ENCODE measurements at regions of chr14 and their contacts with region 1.

Region 1: DNA sequence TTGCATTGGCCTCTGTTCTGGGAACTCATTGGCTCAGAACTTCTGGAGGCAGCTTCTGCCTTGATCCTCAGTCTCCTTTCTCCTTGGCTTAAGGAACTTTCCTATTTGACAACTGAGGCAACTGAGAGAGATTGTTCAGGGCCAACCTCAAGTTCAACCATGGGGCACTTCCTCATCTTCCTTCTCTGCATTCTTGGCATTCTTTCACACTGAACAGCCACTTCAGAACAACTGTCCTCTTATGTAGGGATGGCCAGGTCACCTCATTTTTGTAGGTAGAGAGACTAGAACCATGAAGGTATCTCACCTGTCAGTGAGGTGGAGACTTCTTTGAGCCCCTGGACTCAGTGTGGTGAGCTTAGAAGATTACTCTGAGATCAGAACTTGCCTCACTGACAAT is 63.0 kb upstream of the NRXN3 start:
- DNase-seq: peak; percentile 13
- H3K4me3 Mint-ChIP-seq: no peak overlapping the region
- H3K27ac Mint-ChIP-seq: no peak overlapping the region
- H3K4me1 Mint-ChIP-seq: peaks cover 19% of the 10 kb centered on the region
- H3K27me3 Mint-ChIP-seq: no peaks in the 10 kb centered on the region
- CTCF ChIP-seq: no peak

Region 2: DNA sequence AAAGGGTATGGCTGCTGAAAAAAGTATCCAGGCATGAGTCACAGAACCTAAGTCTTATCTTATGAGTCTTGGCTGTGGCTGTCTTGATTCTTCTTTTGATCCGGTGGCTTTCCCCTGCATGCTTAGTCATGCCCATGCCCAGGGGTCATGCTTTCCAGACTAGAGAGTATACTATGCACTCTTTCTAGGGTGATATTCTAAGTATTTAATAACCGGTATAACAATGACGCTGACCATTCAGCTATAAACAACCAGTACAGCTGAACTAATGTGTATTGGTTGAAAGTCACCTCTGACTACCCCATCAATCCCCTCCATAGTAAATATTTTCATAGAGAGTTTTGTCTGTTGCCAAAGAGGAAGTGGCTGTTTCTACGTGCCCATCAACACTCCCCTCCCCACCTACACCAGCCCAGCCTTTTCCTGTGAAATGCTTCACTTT is 28.3 kb after region 1 on chr14:
- CTCF ChIA-PET with region 1: interaction called, 5 read pairs
- intact Hi-C with region 1: loop called (anchors 1 kb)
- DNase-seq: peak; percentile 74
- H3K4me3 Mint-ChIP-seq: no peak overlapping the region
- H3K27ac Mint-ChIP-seq: peak overlapping the region; percentile 58
- H3K4me1 Mint-ChIP-seq: peaks cover 44% of the 10 kb centered on the region
- H3K27me3 Mint-ChIP-seq: no peaks in the 10 kb centered on the region
- CTCF ChIP-seq: no peak

Region 3: DNA sequence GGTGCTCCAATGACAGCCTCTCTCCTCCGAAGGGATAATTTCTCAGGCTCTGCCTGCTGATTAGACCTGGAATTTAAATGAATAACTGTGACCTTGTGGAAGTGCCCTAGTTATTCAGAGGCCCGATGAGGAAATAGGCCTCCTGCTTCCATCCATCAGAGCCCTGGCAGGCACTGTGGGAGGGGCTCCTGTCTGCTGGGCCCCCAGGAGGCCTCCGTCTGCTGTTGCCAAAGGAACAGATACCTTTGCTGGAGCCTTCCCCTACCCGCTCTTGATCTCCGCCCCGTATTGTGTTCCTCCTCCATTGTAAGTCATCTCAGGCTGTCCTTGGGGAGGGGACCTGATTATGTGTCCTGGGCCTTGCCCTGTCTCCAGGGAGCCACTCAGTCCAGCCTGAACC is 175.2 kb after region 1 on chr14:
- CTCF ChIA-PET with region 1: no interaction called
- intact Hi-C with region 1: no loop called
- DNase-seq: no peak
- H3K4me3 Mint-ChIP-seq: no peak overlapping the region
- H3K27ac Mint-ChIP-seq: no peak overlapping the region
- H3K4me1 Mint-ChIP-seq: no peaks in the 10 kb centered on the region
- H3K27me3 Mint-ChIP-seq: peaks cover 55% of the 10 kb centered on the region
- CTCF ChIP-seq: no peak

Region 4: DNA sequence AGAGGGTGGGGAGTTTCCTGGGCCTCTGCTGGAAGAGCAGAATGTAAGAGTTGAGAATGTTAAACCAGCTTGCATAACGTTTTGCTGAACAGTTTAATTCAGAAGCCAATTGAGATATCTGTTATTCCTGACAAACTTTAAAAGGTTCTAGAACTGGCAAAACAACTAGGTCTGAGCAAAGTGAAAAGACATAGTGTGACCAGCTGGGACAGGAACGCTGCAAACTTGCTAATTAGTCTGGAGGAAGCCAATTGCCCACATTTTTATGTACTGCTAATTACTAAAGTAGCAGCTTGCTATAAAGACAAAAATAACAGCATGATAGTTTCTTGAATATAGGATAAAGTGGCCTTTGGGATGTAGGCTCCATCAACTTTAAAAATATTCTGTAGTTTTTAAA is 767.9 kb after region 1 on chr14:
- CTCF ChIA-PET with region 1: no interaction called
- intact Hi-C with region 1: no loop called
- DNase-seq: no peak
- H3K4me3 Mint-ChIP-seq: no peak overlapping the region
- H3K27ac Mint-ChIP-seq: no peak overlapping the region
- H3K4me1 Mint-ChIP-seq: no peaks in the 10 kb centered on the region
- H3K27me3 Mint-ChIP-seq: peaks cover under 1% of the 10 kb centered on the region
- CTCF ChIP-seq: no peak

Measured in Calu3 (cell line).